Mammary epithelial cell (primary cell): ENCODE measurements at regions of chr2 and their contacts with region 1.

Region 1: GRCh38 chr2:174078275-174078674 is 113.1 kb upstream of the SP3 start:
- DNase-seq: no peak
- H3K4me3 ChIP-seq: no peak overlapping the region
- H3K27ac ChIP-seq: no peak overlapping the region
- H3K4me1 ChIP-seq: peaks cover 5% of the 10 kb centered on the region
- H3K27me3 ChIP-seq: no peaks in the 10 kb centered on the region
- CTCF ChIP-seq: peak; percentile 32 to 51

Region 2: GRCh38 chr2:173815772-173816171 is 262.5 kb before region 1 on chr2:
- CTCF ChIA-PET with region 1: interaction called, 4 read pairs
- dilution Hi-C with region 1: no loop called
- in situ Hi-C with region 1: no loop called
- intact Hi-C with region 1: loop called (anchors 5 kb)
- DNase-seq: peak; percentile 61
- H3K4me3 ChIP-seq: no peak overlapping the region
- H3K27ac ChIP-seq: no peak overlapping the region
- H3K4me1 ChIP-seq: no peaks in the 10 kb centered on the region
- H3K27me3 ChIP-seq: peaks cover 9% of the 10 kb centered on the region
- CTCF ChIP-seq: no peak

Region 3: DNA sequence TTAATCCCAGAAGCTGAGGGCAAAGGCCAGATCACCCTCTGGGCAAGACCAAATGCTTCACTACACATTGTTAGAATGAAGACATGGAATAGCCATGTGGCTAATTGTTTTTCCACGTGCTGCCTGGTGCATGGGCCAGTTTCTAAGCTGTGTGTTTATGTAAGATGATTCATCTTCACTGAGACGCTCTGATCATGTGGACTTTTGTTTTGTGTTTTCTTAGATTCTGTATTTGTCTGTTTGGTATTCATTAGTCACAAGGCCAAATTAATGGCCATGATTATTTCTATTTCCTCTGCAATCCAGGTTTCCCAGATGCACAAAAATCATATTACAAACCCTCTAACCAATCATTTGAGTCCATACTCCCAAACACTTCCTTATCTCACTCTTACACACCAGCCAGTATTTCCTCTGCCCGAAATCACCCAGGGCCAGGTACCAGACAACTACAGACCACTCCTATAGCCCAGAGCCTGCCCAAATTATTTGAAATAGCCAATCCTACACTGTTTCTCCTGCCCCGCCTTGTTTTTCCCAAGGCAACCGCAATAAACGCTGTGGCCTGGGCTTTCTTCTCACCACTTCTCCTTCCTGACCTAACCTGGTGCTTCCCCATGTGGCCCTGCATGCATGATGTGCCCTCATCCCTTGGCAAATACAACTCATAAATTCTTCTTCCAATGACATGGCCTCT is 18.9 kb before region 1 on chr2:
- CTCF ChIA-PET with region 1: no interaction called
- dilution Hi-C with region 1: no loop called
- in situ Hi-C with region 1: no loop called
- intact Hi-C with region 1: loop called (anchors 1 kb)
- DNase-seq: peak; percentile 78
- H3K4me3 ChIP-seq: no peak overlapping the region
- H3K27ac ChIP-seq: peak overlapping the region; percentile 47
- H3K4me1 ChIP-seq: peaks cover 23% of the 10 kb centered on the region
- H3K27me3 ChIP-seq: no peaks in the 10 kb centered on the region
- CTCF ChIP-seq: no peak